OCI-LY7 (cell line): ENCODE measurements at regions of chr22 and their contacts with region 1.

Region 1: DNA sequence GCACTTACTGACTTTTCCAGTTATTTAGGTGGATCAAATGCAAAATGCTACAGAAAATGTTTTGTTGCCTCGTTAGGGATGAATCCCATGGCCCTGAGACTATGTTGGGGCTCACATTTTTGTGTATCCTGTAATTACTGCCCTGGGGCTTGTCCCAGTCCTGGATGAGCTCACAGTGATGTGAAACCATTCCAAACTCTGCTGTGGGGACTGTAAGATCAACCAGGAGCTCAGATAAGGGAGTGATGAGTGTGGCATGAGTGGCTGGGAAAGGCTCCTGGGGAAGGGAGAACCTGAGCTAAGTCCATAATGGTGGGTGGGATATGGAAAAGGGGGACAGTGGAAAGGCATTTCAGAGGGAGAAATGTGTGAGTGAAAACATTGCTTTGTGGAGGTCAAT is 54.0 kb downstream of the SLC5A1 start:
- DNase-seq: no peak
- H3K4me3 ChIP-seq: no peak overlapping the region
- H3K27ac ChIP-seq: no peak overlapping the region
- H3K4me1 ChIP-seq: no peaks in the 10 kb centered on the region
- CTCF ChIP-seq: no peak

Region 2: DNA sequence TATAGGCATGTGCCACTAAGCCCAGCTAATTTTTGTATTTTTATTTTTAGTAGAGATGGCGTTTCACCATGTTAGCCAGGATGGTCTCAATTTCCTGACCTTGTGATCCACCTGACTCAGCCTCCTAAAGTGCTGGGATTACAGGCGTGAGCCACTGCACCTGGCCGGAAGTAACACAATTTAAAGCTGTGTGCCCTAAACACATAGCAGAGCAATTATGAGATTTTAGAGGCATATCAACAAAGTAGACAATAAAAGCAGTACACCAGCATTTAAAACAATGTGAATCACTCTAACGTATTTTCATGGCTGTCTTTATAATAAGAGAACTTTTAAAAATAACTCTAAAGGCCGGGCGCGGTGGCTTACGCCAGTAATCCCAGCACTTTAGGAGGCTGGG is 389.5 kb before region 1 on chr22:
- CTCF ChIA-PET with region 1: no interaction called
- POLR2A ChIA-PET with region 1: interaction called, 10 read pairs
- intact Hi-C with region 1: no loop called
- DNase-seq: peak; percentile 8
- H3K4me3 ChIP-seq: no peak overlapping the region
- H3K27ac ChIP-seq: no peak overlapping the region
- H3K4me1 ChIP-seq: peaks cover 13% of the 10 kb centered on the region
- CTCF ChIP-seq: no peak

Region 3: GRCh38 chr22:32810561-32811004 is 713.6 kb after region 1 on chr22:
- CTCF ChIA-PET with region 1: no interaction called
- POLR2A ChIA-PET with region 1: no interaction called
- intact Hi-C with region 1: no loop called
- DNase-seq: no peak
- H3K4me3 ChIP-seq: no peak overlapping the region
- H3K27ac ChIP-seq: no peak overlapping the region
- H3K4me1 ChIP-seq: no peaks in the 10 kb centered on the region
- CTCF ChIP-seq: no peak